ENCODE measurements at regions of chr1 and their contacts with region 1.

Region 1: DNA sequence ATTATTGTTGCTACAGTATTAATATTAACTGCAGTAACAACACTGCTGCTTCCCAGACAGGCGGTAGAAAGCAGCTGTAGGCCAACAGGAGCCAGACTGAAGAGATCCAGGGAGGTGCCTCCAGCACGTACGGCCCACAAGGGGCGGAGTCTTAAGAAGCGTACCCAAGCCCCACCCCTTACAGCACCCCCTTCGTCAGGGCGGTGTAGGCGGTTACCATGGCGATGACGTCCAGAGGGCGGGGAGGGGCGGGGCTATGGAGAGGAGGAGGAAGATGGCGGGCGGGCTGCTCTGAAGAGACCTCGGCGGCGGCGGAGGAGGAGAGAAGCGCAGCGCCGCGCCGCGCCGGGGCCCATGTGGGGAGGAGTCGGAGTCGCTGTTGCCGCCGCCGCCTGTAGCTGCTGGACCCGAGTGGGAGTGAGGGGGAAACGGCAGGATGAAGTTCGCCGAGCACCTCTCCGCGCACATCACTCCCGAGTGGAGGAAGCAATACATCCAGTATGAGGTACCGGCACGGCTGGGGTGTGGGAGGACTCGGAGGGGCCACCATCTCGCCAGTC is at the start of gene XPR1:
- DNase-seq: peak; percentile 98
- H3K4me3 Mint-ChIP-seq: no peak within 1 kb of the TSS
- H3K27ac Mint-ChIP-seq: no peak within 1 kb of the TSS
- H3K4me1 Mint-ChIP-seq: peaks cover 9% of the 10 kb centered on the region
- H3K27me3 Mint-ChIP-seq: peaks cover 8% of the 10 kb centered on the region
- CTCF ChIP-seq: no peak
- total RNA-seq, gene XPR1: 33.7 and 44.5 TPM in 2 replicates

Region 2: DNA sequence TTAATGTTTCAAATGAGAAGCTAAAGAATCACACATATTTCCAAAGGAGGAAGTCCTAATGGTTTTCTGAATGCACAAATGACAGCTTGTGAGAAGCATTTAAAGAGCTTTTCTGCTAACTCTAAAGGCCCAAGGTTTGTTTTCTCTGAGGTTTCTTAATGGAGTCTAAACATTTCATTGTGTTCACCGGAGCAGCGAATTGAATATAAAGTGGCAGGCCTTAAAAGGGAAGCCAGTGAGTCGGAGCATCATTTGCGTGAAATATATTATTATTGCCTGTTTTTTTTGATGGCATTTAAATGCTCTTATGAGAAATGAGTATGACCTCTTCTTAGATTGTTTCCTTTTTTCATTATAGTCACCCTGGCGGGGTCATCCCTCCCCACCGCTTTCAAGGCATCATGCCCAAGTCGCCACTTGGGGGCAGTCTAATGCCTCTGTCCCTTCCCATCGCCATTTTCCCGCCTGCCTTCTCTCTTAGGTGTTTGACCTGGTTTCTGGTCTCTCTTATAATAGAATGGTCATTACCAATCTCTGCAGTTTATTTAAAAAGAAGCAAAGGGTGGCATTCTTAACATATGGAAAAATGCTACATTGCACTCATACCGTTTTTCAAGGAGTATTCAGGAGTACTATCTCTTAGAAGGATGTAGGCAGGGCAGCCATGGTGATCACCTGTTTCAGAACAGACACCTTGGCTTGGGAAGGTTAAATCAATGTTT is 98.4 kb before region 1 on chr1:
- CTCF ChIA-PET with region 1: interaction called, 3 read pairs
- intact Hi-C with region 1: loop called (anchors 2 kb)
- DNase-seq: peak; percentile 85
- H3K4me3 Mint-ChIP-seq: no peak overlapping the region
- H3K27ac Mint-ChIP-seq: no peak overlapping the region
- H3K4me1 Mint-ChIP-seq: peaks cover 21% of the 10 kb centered on the region
- H3K27me3 Mint-ChIP-seq: no peaks in the 10 kb centered on the region
- CTCF ChIP-seq: peak; percentile 90

Region 3: GRCh38 chr1:180563026-180563827 is 68.6 kb before region 1 on chr1:
- CTCF ChIA-PET with region 1: no interaction called
- intact Hi-C with region 1: no loop called
- DNase-seq: peak; percentile 15
- H3K4me3 Mint-ChIP-seq: no peak overlapping the region
- H3K27ac Mint-ChIP-seq: no peak overlapping the region
- H3K4me1 Mint-ChIP-seq: peaks cover 32% of the 10 kb centered on the region
- H3K27me3 Mint-ChIP-seq: no peaks in the 10 kb centered on the region
- CTCF ChIP-seq: no peak

Measured in Calu3 (cell line).